PC-3 (cell line): ENCODE measurements at regions of chr4 and their contacts with region 1.

Region 1: GRCh38 chr4:26860157-26860921 is at the start of gene STIM2:
- DNase-seq: peak; percentile 95
- ATAC-seq: peak; percentile 60
- H3K4me3 ChIP-seq: peak within 1 kb of the TSS; percentile 80
- H3K27ac ChIP-seq: peak within 1 kb of the TSS; percentile 67
- H3K4me1 ChIP-seq: peaks cover 17% of the 10 kb centered on the region
- H3K27me3 ChIP-seq: no peaks in the 10 kb centered on the region
- CTCF ChIP-seq: no peak
- total RNA-seq, gene STIM2: 15.5 and 16.9 TPM in 2 replicates

Region 2: GRCh38 chr4:26088433-26088928 is 771.9 kb before region 1 on chr4:
- CTCF ChIA-PET with region 1: interaction called, 12 read pairs
- POLR2A ChIA-PET with region 1: no interaction called
- intact Hi-C with region 1: no loop called
- DNase-seq: peak; percentile 93
- ATAC-seq: peak; percentile 81
- H3K4me3 ChIP-seq: no peak overlapping the region
- H3K27ac ChIP-seq: peak overlapping the region; percentile 82
- H3K4me1 ChIP-seq: peaks cover 42% of the 10 kb centered on the region
- H3K27me3 ChIP-seq: no peaks in the 10 kb centered on the region
- CTCF ChIP-seq: no peak

Region 3: DNA sequence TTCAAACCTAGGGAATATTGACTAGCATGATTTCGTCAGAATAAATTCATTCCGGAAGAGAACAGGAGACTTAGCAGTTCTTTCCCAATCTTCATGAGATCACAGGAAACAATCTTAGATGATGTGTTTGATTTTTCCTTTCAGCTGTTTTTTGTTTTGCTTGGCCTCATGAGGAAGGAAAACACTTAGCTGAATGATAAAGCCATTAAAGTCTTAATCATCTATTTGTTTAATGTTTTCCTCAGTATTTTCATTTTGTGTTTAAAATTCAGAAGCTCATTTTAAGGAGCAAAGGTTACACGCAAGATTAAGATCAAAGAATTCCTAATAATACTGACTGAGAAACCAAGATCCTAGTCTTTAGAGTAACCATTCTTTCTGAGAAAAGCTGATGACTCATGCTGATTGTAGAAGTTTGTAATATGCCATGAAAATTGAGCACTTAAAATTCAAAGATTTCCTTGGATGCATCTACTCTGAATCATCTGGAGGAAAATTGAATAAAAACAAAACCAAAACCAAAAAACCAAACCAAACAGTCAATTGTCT is 291.8 kb before region 1 on chr4:
- CTCF ChIA-PET with region 1: no interaction called
- POLR2A ChIA-PET with region 1: no interaction called
- intact Hi-C with region 1: loop called (anchors 5 kb)
- DNase-seq: peak; percentile 93
- ATAC-seq: peak; percentile 80
- H3K4me3 ChIP-seq: no peak overlapping the region
- H3K27ac ChIP-seq: peak overlapping the region; percentile 93
- H3K4me1 ChIP-seq: peaks cover 39% of the 10 kb centered on the region
- H3K27me3 ChIP-seq: no peaks in the 10 kb centered on the region
- CTCF ChIP-seq: no peak

Region 4: GRCh38 chr4:26787461-26788340 is 72.6 kb before region 1 on chr4:
- CTCF ChIA-PET with region 1: interaction called, 5 read pairs
- POLR2A ChIA-PET with region 1: interaction called, 3 read pairs
- intact Hi-C with region 1: loop called (anchors 1 kb)
- DNase-seq: peak; percentile 96
- ATAC-seq: peak; percentile 89
- H3K4me3 ChIP-seq: peak overlapping the region; percentile 38
- H3K27ac ChIP-seq: peak overlapping the region; percentile 97
- H3K4me1 ChIP-seq: peaks cover 39% of the 10 kb centered on the region
- H3K27me3 ChIP-seq: no peaks in the 10 kb centered on the region
- CTCF ChIP-seq: peak; percentile 50

Region 5: GRCh38 chr4:26839534-26839951 is 20.8 kb before region 1 on chr4:
- CTCF ChIA-PET with region 1: no interaction called
- POLR2A ChIA-PET with region 1: no interaction called
- intact Hi-C with region 1: no loop called
- DNase-seq: peak; percentile 34
- ATAC-seq: no peak
- H3K4me3 ChIP-seq: no peak overlapping the region
- H3K27ac ChIP-seq: no peak overlapping the region
- H3K4me1 ChIP-seq: no peaks in the 10 kb centered on the region
- H3K27me3 ChIP-seq: no peaks in the 10 kb centered on the region
- CTCF ChIP-seq: no peak

Region 6: DNA sequence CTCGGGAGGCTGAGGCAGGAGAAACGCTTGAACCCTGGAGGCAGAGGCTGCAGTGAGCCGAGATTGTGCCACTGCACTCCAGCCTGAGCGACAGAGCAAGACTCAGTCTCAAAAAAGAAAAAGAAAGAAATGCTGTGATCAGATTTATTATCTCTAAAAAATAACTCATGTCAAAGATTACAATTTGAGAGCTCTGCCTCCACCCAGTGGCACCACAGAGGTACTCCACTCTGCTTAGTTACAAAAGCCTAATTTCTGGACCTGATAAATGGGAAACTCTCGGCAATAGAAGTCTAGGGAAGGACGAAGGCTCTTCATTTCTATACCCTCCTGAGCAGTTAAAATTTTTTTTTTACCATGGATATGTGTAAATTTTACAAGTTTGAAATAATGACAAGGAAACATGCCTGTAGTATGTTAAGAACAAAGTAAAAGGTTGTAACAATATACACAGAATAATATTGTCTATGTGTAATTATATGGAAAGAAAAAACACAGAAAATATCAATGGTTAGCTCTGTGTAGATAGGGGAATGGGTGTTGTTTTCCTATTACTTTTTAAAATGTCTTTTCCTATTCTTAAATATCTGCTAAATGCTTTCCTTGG is 150.1 kb after region 1 on chr4:
- CTCF ChIA-PET with region 1: no interaction called
- POLR2A ChIA-PET with region 1: no interaction called
- intact Hi-C with region 1: loop called (anchors 1 kb)
- DNase-seq: peak; percentile 66
- ATAC-seq: peak; percentile 25; the same call in 1 of the 2 replicates
- H3K4me3 ChIP-seq: no peak overlapping the region
- H3K27ac ChIP-seq: no peak overlapping the region; the same call in 1 of the 2 replicates
- H3K4me1 ChIP-seq: peaks cover 53% of the 10 kb centered on the region
- H3K27me3 ChIP-seq: no peaks in the 10 kb centered on the region
- CTCF ChIP-seq: peak; percentile 73